ENCODE measurements at regions of chr11 and their contacts with region 1.

Region 1: GRCh38 chr11:125091247-125091876 is 20.1 kb downstream of the TMEM218 start:
- DNase-seq: peak; percentile 58
- ATAC-seq: peak; percentile 95
- H3K4me3 Mint-ChIP-seq: no peak overlapping the region
- H3K27ac Mint-ChIP-seq: peak overlapping the region; percentile 64
- H3K4me1 Mint-ChIP-seq: peaks cover 25% of the 10 kb centered on the region
- H3K27me3 Mint-ChIP-seq: no peaks in the 10 kb centered on the region
- CTCF ChIP-seq: peak; percentile 25; the same call in 1 of the 2 replicates

Region 2: GRCh38 chr11:125075849-125076317 is 15.5 kb before region 1 on chr11:
- CTCF ChIA-PET with region 1: interaction called, 21 read pairs
- POLR2A ChIA-PET with region 1: interaction called, 3 read pairs
- DNase-seq: no peak
- ATAC-seq: peak; percentile 51
- H3K4me3 Mint-ChIP-seq: no peak overlapping the region
- H3K27ac Mint-ChIP-seq: no peak overlapping the region
- H3K4me1 Mint-ChIP-seq: peaks cover 6% of the 10 kb centered on the region
- H3K27me3 Mint-ChIP-seq: no peaks in the 10 kb centered on the region; the same call in 1 of the 2 replicates
- CTCF ChIP-seq: no peak

Region 3: GRCh38 chr11:125123947-125124617 is 32.7 kb after region 1 on chr11:
- CTCF ChIA-PET with region 1: interaction called, 51 read pairs
- POLR2A ChIA-PET with region 1: no interaction called
- DNase-seq: peak; percentile 58
- ATAC-seq: peak; percentile 99
- H3K4me3 Mint-ChIP-seq: no peak overlapping the region
- H3K27ac Mint-ChIP-seq: no peak overlapping the region
- H3K4me1 Mint-ChIP-seq: no peaks in the 10 kb centered on the region
- H3K27me3 Mint-ChIP-seq: peaks cover 77% of the 10 kb centered on the region
- CTCF ChIP-seq: 0 out of 2 replicates have a peak, but pooled peaks have one; percentile 15

Region 4: GRCh38 chr11:125164422-125165110 is 73.2 kb after region 1 on chr11 and contains the start of gene PKNOX2:
- CTCF ChIA-PET with region 1: interaction called, 28 read pairs
- POLR2A ChIA-PET with region 1: no interaction called
- DNase-seq: peak; percentile 91
- ATAC-seq: peak; percentile 36
- H3K4me3 Mint-ChIP-seq: peak within 1 kb of the TSS; percentile 84
- H3K27ac Mint-ChIP-seq: peak within 1 kb of the TSS; percentile 95
- H3K4me1 Mint-ChIP-seq: peaks cover 69% of the 10 kb centered on the region
- H3K27me3 Mint-ChIP-seq: peaks cover 58% of the 10 kb centered on the region
- CTCF ChIP-seq: no peak
- total RNA-seq, gene PKNOX2: 1.9 to 3.7 TPM (median 2.3 TPM) in 3 replicates

Region 5: DNA sequence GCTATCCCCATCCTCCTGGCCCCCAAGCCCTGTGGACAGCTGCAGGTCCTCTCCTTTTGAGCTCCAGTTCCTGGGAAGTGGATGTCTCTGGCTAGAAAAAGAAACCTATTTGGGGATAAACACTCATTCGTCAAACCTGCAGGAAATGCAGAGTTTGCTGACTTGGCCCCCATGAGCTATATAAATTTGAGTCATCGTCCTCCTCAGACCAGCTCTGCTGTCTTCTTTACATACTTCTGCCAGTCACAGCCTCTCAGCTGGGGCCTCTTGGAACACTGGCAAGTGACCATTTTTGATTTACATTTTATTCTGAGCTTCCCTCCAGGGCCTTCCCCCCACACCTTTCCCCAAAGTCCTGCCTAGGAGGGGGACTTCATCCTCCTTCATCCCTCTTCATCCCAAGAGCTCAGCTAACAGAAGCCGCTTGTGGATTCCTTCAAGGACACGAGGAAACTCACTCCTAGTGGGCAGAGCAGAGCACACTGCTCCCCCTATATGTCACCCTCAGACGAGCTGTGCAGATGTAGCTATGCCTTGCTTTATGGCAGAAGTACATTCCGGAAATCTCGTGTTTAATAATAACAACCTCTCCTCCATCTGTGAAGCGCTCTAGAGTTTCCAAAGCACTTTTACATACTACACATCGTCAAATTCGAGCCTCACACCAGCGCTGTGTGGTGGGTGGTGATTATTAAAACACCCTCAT is 272.9 kb after region 1 on chr11:
- CTCF ChIA-PET with region 1: interaction called, 11 read pairs
- POLR2A ChIA-PET with region 1: no interaction called
- DNase-seq: no peak
- ATAC-seq: peak; percentile 61
- H3K4me3 Mint-ChIP-seq: no peak overlapping the region
- H3K27ac Mint-ChIP-seq: no peak overlapping the region
- H3K4me1 Mint-ChIP-seq: peaks cover 14% of the 10 kb centered on the region
- H3K27me3 Mint-ChIP-seq: no peaks in the 10 kb centered on the region; the same call in 1 of the 2 replicates
- CTCF ChIP-seq: 0 out of 2 replicates have a peak, but pooled peaks have one; percentile 13

Region 6: DNA sequence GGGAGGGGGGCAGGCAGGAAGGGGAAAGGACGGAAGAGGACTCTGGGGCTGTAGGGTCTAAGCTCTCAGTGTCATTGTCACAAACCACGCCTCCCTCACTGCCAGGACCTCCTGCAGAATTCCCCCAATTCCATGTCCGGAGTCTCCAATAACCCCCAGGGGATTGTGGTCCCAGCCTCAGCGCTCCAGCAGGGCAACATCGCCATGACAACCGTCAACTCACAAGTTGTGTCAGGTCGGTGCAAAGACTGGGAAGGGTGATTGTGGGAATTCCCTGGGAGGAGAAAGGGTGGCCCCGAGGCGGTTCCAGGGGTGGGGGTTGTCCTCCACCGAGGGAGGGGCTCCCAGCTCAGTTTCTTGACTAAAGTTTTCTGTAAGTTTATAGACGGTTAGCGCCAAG is 318.7 kb after region 1 on chr11:
- CTCF ChIA-PET with region 1: interaction called, 42 read pairs
- POLR2A ChIA-PET with region 1: no interaction called
- DNase-seq: peak; percentile 67
- ATAC-seq: peak; percentile 83
- H3K4me3 Mint-ChIP-seq: no peak overlapping the region
- H3K27ac Mint-ChIP-seq: no peak overlapping the region
- H3K4me1 Mint-ChIP-seq: peaks cover 21% of the 10 kb centered on the region
- H3K27me3 Mint-ChIP-seq: peaks cover 6% of the 10 kb centered on the region; the same call in 1 of the 2 replicates
- CTCF ChIP-seq: no peak

Region 7: GRCh38 chr11:125451400-125452124 is 360.2 kb after region 1 on chr11:
- CTCF ChIA-PET with region 1: interaction called, 12 read pairs
- POLR2A ChIA-PET with region 1: no interaction called
- DNase-seq: peak; percentile 88
- ATAC-seq: peak; percentile 95
- H3K4me3 Mint-ChIP-seq: no peak overlapping the region
- H3K27ac Mint-ChIP-seq: no peak overlapping the region
- H3K4me1 Mint-ChIP-seq: peaks cover 26% of the 10 kb centered on the region
- H3K27me3 Mint-ChIP-seq: no peaks in the 10 kb centered on the region
- CTCF ChIP-seq: no peak